OCI-LY7 (cell line): ENCODE measurements at regions of chr4 and their contacts with region 1.

Region 1: DNA sequence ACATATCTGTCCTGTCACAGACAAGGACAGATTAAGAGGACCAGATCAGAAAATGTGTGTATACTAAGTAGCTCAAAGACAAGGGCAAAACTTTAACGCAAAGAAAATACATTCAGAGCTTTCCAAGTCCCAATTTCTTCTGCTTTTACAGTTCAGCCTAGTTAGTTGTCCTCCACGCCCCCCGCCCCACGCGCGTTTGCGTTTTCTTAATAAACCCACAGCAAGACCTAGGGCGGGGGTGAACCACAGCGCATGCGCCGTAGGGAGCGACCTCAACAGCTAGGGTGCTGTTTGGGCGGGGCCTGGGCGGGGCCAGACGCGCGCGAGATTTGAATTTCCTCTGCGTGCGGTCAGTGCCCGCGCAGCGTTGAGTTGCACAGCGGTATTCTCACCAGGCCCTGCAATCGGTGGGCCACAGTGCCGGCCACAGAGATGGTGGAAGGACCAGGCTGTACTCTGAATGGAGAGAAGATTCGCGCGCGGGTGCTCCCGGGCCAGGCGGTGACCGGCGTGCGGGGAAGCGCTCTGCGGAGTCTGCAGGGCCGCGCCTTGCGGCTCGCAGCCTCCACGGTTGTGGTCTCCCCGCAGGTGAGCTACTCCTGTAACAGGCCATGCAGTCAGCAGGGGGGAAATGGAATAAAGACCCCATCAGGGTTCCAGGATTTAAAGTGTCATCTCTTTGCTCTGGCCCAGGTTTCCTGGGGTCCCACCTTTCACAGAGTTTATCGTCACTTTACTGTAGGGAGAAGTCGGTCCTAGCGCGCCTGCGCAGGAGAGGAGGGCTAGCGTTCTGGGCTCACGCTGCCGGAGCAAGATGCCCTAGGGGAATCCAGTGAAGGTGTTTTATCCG is at the start of gene NEIL3:
- DNase-seq: peak; percentile 94
- H3K4me3 ChIP-seq: peak within 1 kb of the TSS; percentile 94
- H3K27ac ChIP-seq: peak within 1 kb of the TSS; percentile 66
- H3K4me1 ChIP-seq: peaks cover 31% of the 10 kb centered on the region
- CTCF ChIP-seq: no peak
- total RNA-seq, gene NEIL3: 16.8 and 19.1 TPM in 2 replicates

Region 2: GRCh38 chr4:177239878-177240277 is 69.9 kb before region 1 on chr4:
- CTCF ChIA-PET with region 1: no interaction called
- POLR2A ChIA-PET with region 1: no interaction called
- intact Hi-C with region 1: no loop called
- DNase-seq: no peak
- H3K4me3 ChIP-seq: no peak overlapping the region
- H3K27ac ChIP-seq: no peak overlapping the region
- H3K4me1 ChIP-seq: no peaks in the 10 kb centered on the region
- CTCF ChIP-seq: no peak

Region 3: GRCh38 chr4:177322266-177322665 is 12.5 kb after region 1 on chr4:
- CTCF ChIA-PET with region 1: interaction called, 7 read pairs
- POLR2A ChIA-PET with region 1: interaction called, 37 read pairs
- intact Hi-C with region 1: no loop called
- DNase-seq: no peak
- H3K4me3 ChIP-seq: no peak overlapping the region
- H3K27ac ChIP-seq: no peak overlapping the region
- H3K4me1 ChIP-seq: no peaks in the 10 kb centered on the region
- CTCF ChIP-seq: no peak

Region 4: GRCh38 chr4:177441803-177442622 is 132.3 kb after region 1 on chr4 and contains the start of gene AGA:
- CTCF ChIA-PET with region 1: no interaction called
- POLR2A ChIA-PET with region 1: interaction called, 27 read pairs
- intact Hi-C with region 1: loop called (anchors 1 kb)
- DNase-seq: peak; percentile 97
- H3K4me3 ChIP-seq: peak within 1 kb of the TSS; percentile 73
- H3K27ac ChIP-seq: peak within 1 kb of the TSS; percentile 87
- H3K4me1 ChIP-seq: peaks cover 17% of the 10 kb centered on the region
- CTCF ChIP-seq: no peak
- total RNA-seq, gene AGA: 15.5 and 23.8 TPM in 2 replicates